Sciatic nerve (tissue), 2 donors: ENCODE measurements at regions of chr9 and their contacts with region 1.

Region 1: GRCh38 chr9:115770521-115770920 is 383.1 kb upstream of the PAPPA start:
- DNase-seq: no peak
- ATAC-seq: no peak

Region 2: GRCh38 chr9:115240676-115241075 is 529.8 kb before region 1 on chr9:
- intact Hi-C with region 1: loop called (anchors 5 kb)
- DNase-seq: no peak
- ATAC-seq: no peak